ENCODE measurements at regions of chr7 and their contacts with region 1.

Region 1: GRCh38 chr7:22660732-22661131 is 66.3 kb upstream of the IL6 start:
- H3K4me3 Mint-ChIP-seq: no peak overlapping the region
- H3K27ac Mint-ChIP-seq: peak overlapping the region; percentile 94
- H3K4me1 Mint-ChIP-seq: peaks cover 72% of the 10 kb centered on the region
- H3K27me3 Mint-ChIP-seq: peaks cover 13% of the 10 kb centered on the region

Region 2: GRCh38 chr7:22559829-22560489 is 100.8 kb before region 1 on chr7:
- intact Hi-C with region 1: loop called (anchors 5 kb)
- H3K4me3 Mint-ChIP-seq: no peak overlapping the region
- H3K27ac Mint-ChIP-seq: no peak overlapping the region
- H3K4me1 Mint-ChIP-seq: peaks cover 32% of the 10 kb centered on the region
- H3K27me3 Mint-ChIP-seq: peaks cover 40% of the 10 kb centered on the region

Region 3: GRCh38 chr7:22586786-22587140 is 74.0 kb before region 1 on chr7:
- intact Hi-C with region 1: no loop called
- H3K4me3 Mint-ChIP-seq: no peak overlapping the region
- H3K27ac Mint-ChIP-seq: peak overlapping the region; percentile 71
- H3K4me1 Mint-ChIP-seq: peaks cover 59% of the 10 kb centered on the region
- H3K27me3 Mint-ChIP-seq: peaks cover 21% of the 10 kb centered on the region

Region 4: GRCh38 chr7:22697876-22698606 is 37.3 kb after region 1 on chr7:
- intact Hi-C with region 1: loop called (anchors 2 kb)
- H3K4me3 Mint-ChIP-seq: no peak overlapping the region
- H3K27ac Mint-ChIP-seq: peak overlapping the region; percentile 47
- H3K4me1 Mint-ChIP-seq: peaks cover 69% of the 10 kb centered on the region
- H3K27me3 Mint-ChIP-seq: peaks cover 14% of the 10 kb centered on the region

Region 5: GRCh38 chr7:22781230-22781711 is 120.5 kb after region 1 on chr7:
- intact Hi-C with region 1: no loop called
- H3K4me3 Mint-ChIP-seq: no peak overlapping the region
- H3K27ac Mint-ChIP-seq: no peak overlapping the region
- H3K4me1 Mint-ChIP-seq: no peaks in the 10 kb centered on the region
- H3K27me3 Mint-ChIP-seq: peaks cover 9% of the 10 kb centered on the region

Region 6: DNA sequence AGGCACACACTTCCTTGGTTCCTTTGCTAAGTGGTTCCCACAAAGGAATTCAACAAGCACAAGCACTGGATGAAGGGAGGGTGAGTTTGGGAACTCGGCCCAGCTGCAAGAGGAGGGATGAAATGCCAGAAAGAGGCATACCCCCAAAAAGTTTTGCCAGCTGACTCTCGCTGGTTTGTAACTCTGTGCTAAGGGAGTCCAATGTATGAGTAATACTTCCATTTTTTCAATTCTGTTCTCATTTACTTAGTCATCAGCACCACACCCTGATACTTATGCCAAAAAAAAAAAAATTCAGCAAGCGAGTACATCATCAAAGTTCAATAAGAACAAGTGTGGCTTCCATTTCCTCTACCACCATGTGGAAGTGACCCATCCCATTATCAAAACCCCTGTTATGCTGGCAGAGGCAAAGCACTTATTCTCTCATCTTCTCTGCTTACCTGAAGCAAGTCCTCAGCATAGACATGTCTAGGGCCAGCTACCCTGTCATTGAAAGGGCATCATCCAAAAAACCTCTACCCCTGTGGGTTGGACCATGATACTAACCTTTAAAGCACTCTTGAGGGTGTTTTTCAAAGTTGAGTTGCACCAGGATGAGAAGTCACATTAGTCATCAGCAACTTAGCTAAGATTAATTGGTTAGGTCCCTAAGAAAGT is 360.1 kb after region 1 on chr7:
- intact Hi-C with region 1: loop called (anchors 5 kb)
- H3K4me3 Mint-ChIP-seq: peak overlapping the region; percentile 35
- H3K27ac Mint-ChIP-seq: peak overlapping the region; percentile 99
- H3K4me1 Mint-ChIP-seq: peaks cover 77% of the 10 kb centered on the region
- H3K27me3 Mint-ChIP-seq: peaks cover 6% of the 10 kb centered on the region